ENCODE measurements at regions of chr10 and their contacts with region 1.

Region 1: GRCh38 chr10:73167783-73168464 is at the starts of genes ECD and FAM149B1:
- DNase-seq: peak; percentile 97 to 99 (median 97)
- ATAC-seq: peak; percentile 99
- H3K4me3 ChIP-seq: peak within 1 kb of the TSS; percentile 67
- H3K27ac ChIP-seq: peak within 1 kb of the TSS; percentile 88
- H3K4me1 ChIP-seq: peaks cover 3 to 4% of the 10 kb centered on the region in 2 experiments; a peak in 2 of 5 replicates
- H3K27me3 ChIP-seq: no peaks in the 10 kb centered on the region
- CTCF ChIP-seq: peak; percentile 48 to 66 (median 56)
- EP300 ChIP-seq: peak; percentile 46; the same call in 1 of the 2 replicates
- POLR2A ChIP-seq: peak; percentile 98
- RAD21 ChIP-seq: peak in 1 of 2 experiments; percentile 51; a peak in 2 of 4 replicates
- polyA plus RNA-seq, gene ECD: 33.5 to 75.3 TPM
- polyA plus RNA-seq, gene FAM149B1: 14.4 to 16.9 TPM

Region 2: GRCh38 chr10:73110345-73110849 is 57.5 kb before region 1 on chr10 and contains the start of gene NUDT13:
- CTCF ChIA-PET with region 1: no interaction called
- POLR2A ChIA-PET with region 1: interaction called, 4 read pairs
- in situ Hi-C with region 1: no loop called
- intact Hi-C with region 1: loop called (anchors 5 kb)
- DNase-seq: peak; percentile 63 to 91 (median 76)
- ATAC-seq: peak; percentile 96
- H3K4me3 ChIP-seq: peak within 1 kb of the TSS; percentile 47
- H3K27ac ChIP-seq: peak within 1 kb of the TSS; percentile 89
- H3K4me1 ChIP-seq: peaks cover 3 to 5% of the 10 kb centered on the region in 2 experiments; a peak in 2 of 5 replicates
- H3K27me3 ChIP-seq: no peaks in the 10 kb centered on the region
- CTCF ChIP-seq: peak in 1 of 3 experiments; percentile 34; a peak in 2 of 6 replicates
- EP300 ChIP-seq: peak; percentile 45; the same call in 1 of the 2 replicates
- POLR2A ChIP-seq: no peak
- RAD21 ChIP-seq: no peak; a peak in 1 of 4 replicates
- polyA plus RNA-seq, gene NUDT13: 5.2 to 7.1 TPM

Region 3: GRCh38 chr10:73131301-73131700 is 36.6 kb before region 1 on chr10:
- CTCF ChIA-PET with region 1: no interaction called
- POLR2A ChIA-PET with region 1: no interaction called
- in situ Hi-C with region 1: no loop called
- intact Hi-C with region 1: no loop called
- DNase-seq: no peak
- ATAC-seq: no peak
- H3K4me3 ChIP-seq: no peak overlapping the region
- H3K27ac ChIP-seq: no peak overlapping the region
- H3K4me1 ChIP-seq: no peaks in the 10 kb centered on the region
- H3K27me3 ChIP-seq: no peaks in the 10 kb centered on the region
- CTCF ChIP-seq: no peak
- EP300 ChIP-seq: no peak
- POLR2A ChIP-seq: no peak
- RAD21 ChIP-seq: no peak

Region 4: GRCh38 chr10:73218431-73219191 is 50.7 kb after region 1 on chr10:
- CTCF ChIA-PET with region 1: no interaction called
- POLR2A ChIA-PET with region 1: interaction called, 3 read pairs
- in situ Hi-C with region 1: no loop called
- intact Hi-C with region 1: loop called (anchors 5 kb)
- DNase-seq: peak; percentile 37 to 67 (median 54)
- ATAC-seq: peak; percentile 90
- H3K4me3 ChIP-seq: no peak overlapping the region
- H3K27ac ChIP-seq: no peak overlapping the region
- H3K4me1 ChIP-seq: peaks cover 0 to 9% of the 10 kb centered on the region in 2 experiments; a peak in 2 of 5 replicates
- H3K27me3 ChIP-seq: no peaks in the 10 kb centered on the region
- CTCF ChIP-seq: peak; percentile 52 to 71 (median 61); a peak in 5 of 6 replicates
- EP300 ChIP-seq: no peak
- POLR2A ChIP-seq: no peak
- RAD21 ChIP-seq: peak; percentile 25 to 72; a peak in 3 of 4 replicates

Region 5: DNA sequence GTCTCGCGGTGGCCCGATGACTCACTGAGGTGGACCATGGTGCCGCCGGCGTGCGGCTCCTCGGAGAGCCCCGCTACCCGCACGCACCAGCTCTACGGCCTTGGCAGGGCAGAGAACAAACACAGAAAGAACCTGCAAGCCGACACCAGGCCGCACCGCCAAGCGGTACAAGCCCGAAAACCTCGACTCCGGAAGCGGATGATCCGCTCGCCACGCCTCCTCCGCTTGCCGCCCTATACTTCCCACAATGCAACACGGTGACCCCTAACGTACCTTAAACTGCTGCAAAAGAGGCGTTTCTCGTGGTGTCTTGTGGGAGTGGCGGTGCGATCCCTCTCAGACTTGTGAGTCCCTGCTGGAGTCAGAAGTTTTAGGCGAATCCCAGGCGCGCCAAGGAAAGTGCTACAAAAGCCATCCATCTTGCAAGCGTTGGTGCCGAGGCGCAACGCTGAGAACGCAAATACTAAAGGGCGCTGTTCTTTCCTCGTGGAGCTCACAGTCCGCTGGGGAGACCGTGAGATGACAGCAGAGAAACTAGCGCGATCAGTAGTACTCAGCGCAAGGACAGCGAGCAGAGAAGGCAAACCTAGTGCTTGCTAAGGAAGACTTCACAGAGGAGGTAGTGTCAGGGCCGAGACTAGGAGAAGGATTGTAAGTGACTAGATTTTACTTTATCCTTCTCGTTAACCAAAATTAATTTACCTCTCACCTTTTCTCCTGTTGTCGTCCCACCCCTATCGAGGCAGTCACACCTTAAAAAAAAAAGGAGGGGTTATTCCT is 84.7 kb after region 1 on chr10 and contains the start of gene MRPS16:
- CTCF ChIA-PET with region 1: no interaction called
- POLR2A ChIA-PET with region 1: no interaction called
- in situ Hi-C with region 1: no loop called
- intact Hi-C with region 1: loop called (anchors 2 kb)
- DNase-seq: peak; percentile 93 to 99 (median 95)
- ATAC-seq: peak; percentile 87
- H3K4me3 ChIP-seq: peak within 1 kb of the TSS; percentile 59
- H3K27ac ChIP-seq: peak within 1 kb of the TSS; percentile 89
- H3K4me1 ChIP-seq: peaks cover 7 to 28% of the 10 kb centered on the region in 2 experiments; a peak in 4 of 5 replicates
- H3K27me3 ChIP-seq: no peaks in the 10 kb centered on the region
- CTCF ChIP-seq: peak in 2 of 3 experiments; percentile 1 to 20; a peak in 2 of 6 replicates
- EP300 ChIP-seq: peak; percentile 52; the same call in 1 of the 2 replicates
- POLR2A ChIP-seq: peak; percentile 98
- RAD21 ChIP-seq: no peak
- polyA plus RNA-seq, gene MRPS16: 65.0 to 99.7 TPM

Region 6: DNA sequence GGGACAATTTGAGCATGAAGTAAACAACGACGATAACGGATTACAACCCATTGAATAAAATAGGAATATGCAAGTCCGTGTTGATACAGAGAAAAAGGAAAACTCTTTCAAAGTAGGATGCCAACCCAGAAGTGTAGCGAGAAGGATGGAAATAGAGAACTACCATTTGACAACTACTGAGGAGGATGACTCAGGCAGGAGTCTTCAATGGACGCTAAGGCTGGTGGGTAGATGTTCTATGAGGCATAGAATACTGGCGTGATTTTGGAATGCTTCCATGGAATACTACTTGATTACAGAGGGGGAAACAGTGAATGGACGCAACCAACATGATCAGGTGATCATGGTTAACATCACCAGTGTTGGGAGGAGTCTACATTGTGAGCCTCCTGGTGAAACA is 191.6 kb after region 1 on chr10:
- CTCF ChIA-PET with region 1: no interaction called
- POLR2A ChIA-PET with region 1: no interaction called
- in situ Hi-C with region 1: no loop called
- intact Hi-C with region 1: no loop called
- DNase-seq: no peak
- ATAC-seq: no peak
- H3K4me3 ChIP-seq: no peak overlapping the region
- H3K27ac ChIP-seq: no peak overlapping the region
- H3K4me1 ChIP-seq: no peaks in the 10 kb centered on the region; a peak in 1 of 5 replicates
- H3K27me3 ChIP-seq: no peaks in the 10 kb centered on the region
- CTCF ChIP-seq: no peak
- EP300 ChIP-seq: no peak
- POLR2A ChIP-seq: no peak
- RAD21 ChIP-seq: no peak

Region 7: GRCh38 chr10:73376679-73377078 is 208.8 kb after region 1 on chr10:
- CTCF ChIA-PET with region 1: no interaction called
- POLR2A ChIA-PET with region 1: no interaction called
- in situ Hi-C with region 1: no loop called
- intact Hi-C with region 1: no loop called
- DNase-seq: no peak
- ATAC-seq: no peak
- H3K4me3 ChIP-seq: no peak overlapping the region
- H3K27ac ChIP-seq: no peak overlapping the region
- H3K4me1 ChIP-seq: no peaks in the 10 kb centered on the region
- H3K27me3 ChIP-seq: no peaks in the 10 kb centered on the region
- CTCF ChIP-seq: no peak
- EP300 ChIP-seq: no peak
- POLR2A ChIP-seq: no peak
- RAD21 ChIP-seq: no peak

Measured in K562 (cell line).